ENCODE measurements at regions of chr4 and their contacts with region 1.

Region 1: DNA sequence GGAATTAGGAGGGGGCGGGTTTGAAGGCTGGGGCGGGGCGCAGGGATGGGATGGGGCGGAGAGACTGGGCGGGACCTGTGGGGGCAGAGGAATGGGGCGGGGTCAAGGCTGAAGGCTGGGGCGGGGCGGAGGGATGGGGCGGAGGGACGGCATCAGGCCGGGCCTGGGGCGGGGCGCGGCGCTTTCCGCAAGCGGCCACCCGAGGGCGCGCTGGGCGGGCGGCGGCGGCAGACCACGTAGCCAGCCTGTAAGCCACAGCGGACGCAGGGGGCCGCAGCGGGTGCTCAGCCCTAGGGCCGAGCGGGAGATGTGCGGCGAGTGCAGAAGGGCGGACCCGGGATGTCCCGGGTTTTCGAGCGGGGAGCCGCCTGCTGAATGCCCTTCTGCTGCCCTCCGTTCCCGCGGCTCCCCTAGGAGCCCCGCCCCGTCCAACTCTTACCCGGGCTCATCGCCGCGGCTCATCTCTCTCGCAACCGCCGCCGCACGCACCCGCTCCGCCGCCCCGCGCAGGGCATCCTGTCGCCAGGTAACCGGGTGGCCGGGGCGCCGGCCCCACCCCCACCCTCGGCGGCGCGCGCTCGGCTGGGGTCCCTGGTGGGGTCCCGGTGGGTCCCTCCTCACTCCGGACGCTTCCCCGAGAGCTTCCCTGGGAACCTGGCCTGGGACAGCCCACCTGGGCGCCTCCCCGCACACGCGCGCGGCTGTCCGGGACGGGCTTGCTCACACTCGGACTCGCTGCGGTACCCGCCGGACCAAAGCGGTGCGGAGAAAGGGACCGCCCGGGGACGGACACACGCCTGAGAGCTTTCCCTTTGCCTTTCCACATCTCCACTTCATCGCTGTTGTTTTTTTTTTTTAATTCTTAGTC is at the start of gene CCDC110:
- DNase-seq: peak; percentile 87
- ATAC-seq: peak; percentile 95
- H3K4me3 Mint-ChIP-seq: peak within 1 kb of the TSS; percentile 88
- H3K27ac Mint-ChIP-seq: peak within 1 kb of the TSS; percentile 80
- H3K4me1 Mint-ChIP-seq: peaks cover 18% of the 10 kb centered on the region
- H3K27me3 Mint-ChIP-seq: no peaks in the 10 kb centered on the region
- CTCF ChIP-seq: no peak
- total RNA-seq, gene CCDC110: 0.33 and 0.71 TPM in 2 replicates

Region 2: GRCh38 chr4:184733654-184734524 is 737.6 kb before region 1 on chr4 and contains the start of gene CENPU:
- CTCF ChIA-PET with region 1: no interaction called
- POLR2A ChIA-PET with region 1: no interaction called
- intact Hi-C with region 1: loop called (anchors 1 kb)
- DNase-seq: peak; percentile 95
- ATAC-seq: peak; percentile 96
- H3K4me3 Mint-ChIP-seq: peak within 1 kb of the TSS; percentile 88
- H3K27ac Mint-ChIP-seq: peak within 1 kb of the TSS; percentile 85
- H3K4me1 Mint-ChIP-seq: peaks cover 19% of the 10 kb centered on the region
- H3K27me3 Mint-ChIP-seq: no peaks in the 10 kb centered on the region
- CTCF ChIP-seq: no peak
- total RNA-seq, gene CENPU: 7.0 and 7.1 TPM in 2 replicates

Region 3: GRCh38 chr4:184805462-184806228 is 665.8 kb before region 1 on chr4:
- CTCF ChIA-PET with region 1: no interaction called
- POLR2A ChIA-PET with region 1: no interaction called
- intact Hi-C with region 1: no loop called
- DNase-seq: peak; percentile 26
- ATAC-seq: peak; percentile 89
- H3K4me3 Mint-ChIP-seq: peak overlapping the region; percentile 33
- H3K27ac Mint-ChIP-seq: peak overlapping the region; percentile 54
- H3K4me1 Mint-ChIP-seq: peaks cover 39% of the 10 kb centered on the region
- H3K27me3 Mint-ChIP-seq: no peaks in the 10 kb centered on the region
- CTCF ChIP-seq: no peak

Region 4: DNA sequence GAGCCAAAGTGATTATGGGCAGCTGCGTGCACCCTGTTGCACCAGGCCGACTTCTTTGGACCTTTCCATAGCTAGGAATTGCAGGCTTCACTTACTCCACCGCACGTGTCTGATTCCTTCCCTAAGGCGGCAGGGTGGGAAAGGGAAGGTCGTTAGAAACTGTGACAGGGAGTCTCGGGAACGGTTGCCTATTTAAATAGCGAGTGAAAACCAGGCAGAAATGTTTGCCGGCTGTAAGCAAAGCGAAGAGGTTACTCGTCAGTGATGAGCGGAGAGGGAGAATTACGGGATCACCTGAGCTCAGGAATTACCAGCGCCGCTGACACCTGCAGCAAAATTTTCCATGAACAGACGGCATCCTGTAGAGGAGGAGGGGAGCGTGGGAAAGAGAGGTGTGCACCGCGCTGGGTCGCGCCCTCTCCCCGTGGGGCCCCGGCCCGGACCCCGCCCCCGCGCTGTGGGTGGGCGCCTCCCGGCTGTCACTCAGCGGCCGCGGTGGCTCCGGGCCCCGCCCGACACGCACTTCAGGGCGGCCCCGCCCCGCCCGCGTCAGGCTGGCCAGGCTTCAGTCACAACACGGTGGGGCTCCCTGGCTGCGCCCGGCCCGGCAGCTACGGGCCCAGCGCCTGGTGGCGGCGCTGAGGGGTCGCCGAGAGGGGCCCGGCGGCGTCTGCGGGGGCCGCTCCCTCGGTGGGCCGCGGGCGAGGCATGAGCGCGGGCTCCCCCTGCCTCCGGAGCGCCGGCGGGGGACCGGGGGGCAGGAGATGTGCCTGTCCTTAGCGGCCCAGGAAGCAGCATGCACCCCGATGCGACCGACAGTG is 262.2 kb before region 1 on chr4 and contains the start of gene SNX25:
- CTCF ChIA-PET with region 1: no interaction called
- POLR2A ChIA-PET with region 1: no interaction called
- intact Hi-C with region 1: loop called (anchors 1 kb)
- DNase-seq: peak; percentile 94
- ATAC-seq: peak; percentile 83
- H3K4me3 Mint-ChIP-seq: peak within 1 kb of the TSS; percentile 95
- H3K27ac Mint-ChIP-seq: peak within 1 kb of the TSS; percentile 94
- H3K4me1 Mint-ChIP-seq: peaks cover 63% of the 10 kb centered on the region
- H3K27me3 Mint-ChIP-seq: no peaks in the 10 kb centered on the region
- CTCF ChIP-seq: no peak
- total RNA-seq, gene SNX25: 53.1 and 53.7 TPM in 2 replicates

Region 5: GRCh38 chr4:185425647-185426352 is 45.7 kb before region 1 on chr4 and contains the start of gene UFSP2:
- CTCF ChIA-PET with region 1: interaction called, 3 read pairs
- POLR2A ChIA-PET with region 1: interaction called, 12 read pairs
- intact Hi-C with region 1: loop called (anchors 1 kb)
- DNase-seq: peak; percentile 92
- ATAC-seq: peak; percentile 86
- H3K4me3 Mint-ChIP-seq: peak within 1 kb of the TSS; percentile 89
- H3K27ac Mint-ChIP-seq: peak within 1 kb of the TSS; percentile 99
- H3K4me1 Mint-ChIP-seq: peaks cover 17% of the 10 kb centered on the region
- H3K27me3 Mint-ChIP-seq: no peaks in the 10 kb centered on the region
- CTCF ChIP-seq: no peak
- total RNA-seq, gene UFSP2: 20.1 and 21.6 TPM in 2 replicates

Region 6: GRCh38 chr4:185597532-185598188 is 126.2 kb after region 1 on chr4:
- CTCF ChIA-PET with region 1: interaction called, 21 read pairs
- POLR2A ChIA-PET with region 1: interaction called, 3 read pairs
- intact Hi-C with region 1: loop called (anchors 1 kb)
- DNase-seq: peak; percentile 49
- ATAC-seq: peak; percentile 72
- H3K4me3 Mint-ChIP-seq: no peak overlapping the region
- H3K27ac Mint-ChIP-seq: no peak overlapping the region
- H3K4me1 Mint-ChIP-seq: no peaks in the 10 kb centered on the region
- H3K27me3 Mint-ChIP-seq: peaks cover 19% of the 10 kb centered on the region
- CTCF ChIP-seq: peak; percentile 100

Region 7: DNA sequence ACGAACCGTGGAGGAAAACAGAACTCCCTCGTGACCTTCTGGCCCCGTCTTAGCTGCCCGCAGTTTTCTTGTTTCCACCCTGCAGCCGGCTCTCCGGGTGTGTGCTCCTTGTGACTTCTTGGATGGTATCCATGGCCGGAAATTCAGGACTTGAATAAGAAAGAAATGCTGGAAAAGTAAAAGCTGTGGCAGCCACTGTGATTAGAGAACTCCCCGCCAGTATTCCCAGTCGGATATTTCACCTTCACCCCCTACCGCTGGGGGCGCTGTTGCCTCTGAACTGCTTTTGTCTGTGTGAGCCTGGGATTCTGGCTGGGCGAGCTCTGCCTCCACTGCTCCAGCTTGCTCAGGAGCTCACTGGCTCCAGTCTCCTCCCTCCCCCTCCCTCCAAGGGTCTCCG is 678.4 kb after region 1 on chr4:
- CTCF ChIA-PET with region 1: no interaction called
- POLR2A ChIA-PET with region 1: no interaction called
- intact Hi-C with region 1: no loop called
- DNase-seq: no peak
- ATAC-seq: no peak
- H3K4me3 Mint-ChIP-seq: no peak overlapping the region
- H3K27ac Mint-ChIP-seq: no peak overlapping the region
- H3K4me1 Mint-ChIP-seq: peaks cover 6% of the 10 kb centered on the region
- H3K27me3 Mint-ChIP-seq: peaks cover 39% of the 10 kb centered on the region
- CTCF ChIP-seq: no peak

Region 8: DNA sequence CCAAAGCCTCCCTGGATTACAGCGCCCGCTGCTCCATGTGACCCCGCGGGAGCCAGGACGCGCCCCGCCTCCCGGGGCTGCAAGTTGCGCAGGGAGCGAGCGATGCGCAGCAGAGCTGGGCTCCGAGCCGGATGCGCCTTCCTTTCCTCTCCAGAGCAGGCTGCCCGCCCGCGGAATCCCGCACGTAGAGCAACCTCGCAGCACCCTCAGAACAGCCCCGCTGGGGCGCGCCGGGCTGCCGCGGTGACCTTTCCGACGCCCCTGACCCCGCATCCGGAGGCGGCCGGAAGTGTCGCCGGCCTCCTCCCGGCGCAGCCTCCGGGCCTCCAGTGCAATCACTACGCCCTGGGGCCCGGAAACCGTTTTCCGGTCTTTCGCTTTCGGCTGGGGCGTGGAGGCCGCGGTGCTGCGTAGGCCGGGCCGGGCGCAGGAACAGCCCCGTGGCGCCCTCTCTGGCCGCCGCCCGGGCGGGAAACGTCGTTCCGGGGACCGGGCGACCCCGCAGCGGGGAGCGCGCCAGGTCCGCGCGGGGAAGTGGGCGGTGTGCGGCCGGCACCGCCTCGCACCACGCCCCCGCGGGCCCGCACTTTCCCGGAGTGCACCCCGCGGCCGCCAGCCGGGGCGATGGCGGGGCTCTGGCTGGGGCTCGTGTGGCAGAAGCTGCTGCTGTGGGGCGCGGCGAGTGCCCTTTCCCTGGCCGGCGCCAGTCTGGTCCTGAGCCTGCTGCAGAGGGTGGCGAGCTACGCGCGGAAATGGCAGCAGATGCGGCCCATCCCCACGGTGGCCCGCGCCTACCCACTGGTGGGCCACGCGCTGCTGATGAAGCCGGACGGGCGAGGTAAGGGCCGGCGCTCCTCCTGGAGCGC is 720.0 kb after region 1 on chr4 and contains the start of gene CYP4V2:
- CTCF ChIA-PET with region 1: no interaction called
- POLR2A ChIA-PET with region 1: no interaction called
- intact Hi-C with region 1: loop called (anchors 2 kb)
- DNase-seq: peak; percentile 84
- ATAC-seq: peak; percentile 86
- H3K4me3 Mint-ChIP-seq: peak within 1 kb of the TSS; percentile 90
- H3K27ac Mint-ChIP-seq: peak within 1 kb of the TSS; percentile 88
- H3K4me1 Mint-ChIP-seq: peaks cover 26% of the 10 kb centered on the region
- H3K27me3 Mint-ChIP-seq: peaks cover 2% of the 10 kb centered on the region
- CTCF ChIP-seq: no peak
- total RNA-seq, gene CYP4V2: 7.7 and 9.5 TPM in 2 replicates

Region 9: GRCh38 chr4:186770481-186771175 is 1299.2 kb after region 1 on chr4:
- CTCF ChIA-PET with region 1: no interaction called
- POLR2A ChIA-PET with region 1: no interaction called
- intact Hi-C with region 1: no loop called
- DNase-seq: no peak
- ATAC-seq: no peak
- H3K4me3 Mint-ChIP-seq: no peak overlapping the region
- H3K27ac Mint-ChIP-seq: no peak overlapping the region
- H3K4me1 Mint-ChIP-seq: no peaks in the 10 kb centered on the region
- H3K27me3 Mint-ChIP-seq: no peaks in the 10 kb centered on the region
- CTCF ChIP-seq: no peak